ENCODE measurements at regions of chr18 and their contacts with region 1.

Region 1: GRCh38 chr18:35343936-35344735 is at the start of gene ZNF24:
- DNase-seq: peak; percentile 89 to 90
- H3K4me3 ChIP-seq: peak within 1 kb of the TSS; percentile 75
- H3K4me3 Mint-ChIP-seq: peak within 1 kb of the TSS; percentile 97
- H3K27ac Mint-ChIP-seq: peak within 1 kb of the TSS; percentile 92
- H3K4me1 ChIP-seq: no peaks in the 10 kb centered on the region
- H3K4me1 Mint-ChIP-seq: no peaks in the 10 kb centered on the region
- H3K27me3 ChIP-seq: no peaks in the 10 kb centered on the region
- H3K27me3 Mint-ChIP-seq: no peaks in the 10 kb centered on the region
- CTCF ChIP-seq: no peak
- total RNA-seq, gene ZNF24: 19.4 and 21.3 TPM in 2 replicates

Region 2: DNA sequence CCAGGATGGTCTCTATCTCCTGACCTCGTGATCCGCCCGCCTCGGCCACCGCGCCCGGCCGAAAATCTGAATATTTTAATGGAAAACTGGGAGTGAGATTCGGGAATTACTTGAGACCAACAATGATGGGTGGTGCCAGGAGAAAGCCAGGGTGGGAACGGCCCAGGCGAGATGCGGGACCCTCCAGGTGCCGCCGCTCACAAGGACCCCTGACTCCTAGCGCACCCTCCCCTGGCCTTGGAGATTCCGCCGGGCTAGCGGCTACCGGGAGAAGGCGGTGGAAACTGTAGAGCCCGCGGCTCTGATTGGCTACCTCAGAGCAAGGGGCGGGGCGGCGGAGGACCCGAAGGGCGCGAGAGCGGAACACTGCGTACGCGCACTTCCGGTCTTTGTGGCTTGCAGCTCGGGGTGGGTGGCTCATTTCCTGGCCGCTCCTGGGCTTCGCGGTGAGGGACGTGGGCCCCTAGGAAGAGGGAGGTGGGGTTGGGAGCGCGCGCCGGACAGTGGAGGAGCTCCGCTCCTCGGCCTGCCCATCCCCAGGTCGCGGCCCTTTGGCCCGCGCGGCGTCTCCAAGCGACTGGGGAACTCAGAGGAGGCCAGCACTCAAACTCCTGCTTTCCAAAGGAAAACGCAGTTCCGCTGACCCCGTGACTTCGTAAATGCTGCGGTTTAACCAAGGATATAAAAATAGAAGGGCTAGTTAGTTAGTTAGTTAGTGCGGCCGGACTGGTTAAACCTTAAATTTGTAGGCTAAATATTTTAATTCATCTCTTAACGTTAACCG is 103.3 kb before region 1 on chr18 and contains the start of gene ZNF397:
- CTCF ChIA-PET with region 1: no interaction called
- POLR2A ChIA-PET with region 1: no interaction called
- intact Hi-C with region 1: loop called (anchors 2 kb)
- DNase-seq: peak; percentile 92 to 94
- H3K4me3 ChIP-seq: peak within 1 kb of the TSS; percentile 68
- H3K4me3 Mint-ChIP-seq: peak within 1 kb of the TSS; percentile 80
- H3K27ac Mint-ChIP-seq: peak within 1 kb of the TSS; percentile 94
- H3K4me1 ChIP-seq: no peaks in the 10 kb centered on the region
- H3K4me1 Mint-ChIP-seq: no peaks in the 10 kb centered on the region
- H3K27me3 ChIP-seq: no peaks in the 10 kb centered on the region
- H3K27me3 Mint-ChIP-seq: no peaks in the 10 kb centered on the region
- CTCF ChIP-seq: no peak
- total RNA-seq, gene ZNF397: 4.9 and 6.0 TPM in 2 replicates

Region 3: DNA sequence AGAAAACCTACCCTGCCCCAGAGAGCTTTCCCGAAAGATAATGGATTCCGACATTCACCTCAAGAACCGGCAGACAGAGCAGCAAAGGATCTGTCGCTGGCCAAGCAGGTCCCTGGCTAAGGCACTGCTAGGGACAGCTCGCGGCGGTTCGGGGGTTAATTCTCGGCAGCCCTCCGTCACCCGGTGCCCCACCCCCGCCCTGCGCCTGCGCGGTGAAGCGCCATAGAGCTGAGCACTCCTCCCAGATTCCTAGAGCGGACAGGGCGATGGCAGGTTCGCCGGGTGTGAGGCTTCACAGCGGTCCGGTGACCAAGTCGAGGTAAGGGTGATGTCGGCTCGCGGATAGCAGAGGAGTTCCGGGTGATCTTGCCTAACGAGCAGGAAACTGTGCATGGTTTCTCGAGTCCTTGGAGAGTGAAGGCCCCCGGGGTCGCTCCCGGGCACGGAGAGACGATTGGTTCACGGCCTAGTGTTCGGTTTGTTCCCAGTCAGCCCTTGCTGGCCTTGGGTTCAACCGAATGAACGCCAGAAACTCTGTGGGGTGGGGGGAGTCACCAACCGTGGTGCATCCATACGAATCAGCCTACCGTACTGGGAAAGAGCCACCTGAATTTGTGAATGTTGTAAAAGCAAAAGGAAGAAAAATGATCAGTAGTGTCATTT is 53.9 kb before region 1 on chr18 and contains the start of gene ZSCAN30:
- CTCF ChIA-PET with region 1: no interaction called
- POLR2A ChIA-PET with region 1: no interaction called
- intact Hi-C with region 1: loop called (anchors 1 kb)
- DNase-seq: peak; percentile 91 to 92
- H3K4me3 ChIP-seq: peak within 1 kb of the TSS; percentile 47
- H3K4me3 Mint-ChIP-seq: peak within 1 kb of the TSS; percentile 95
- H3K27ac Mint-ChIP-seq: peak within 1 kb of the TSS; percentile 97
- H3K4me1 ChIP-seq: no peaks in the 10 kb centered on the region
- H3K4me1 Mint-ChIP-seq: peaks cover 6% of the 10 kb centered on the region
- H3K27me3 ChIP-seq: no peaks in the 10 kb centered on the region
- H3K27me3 Mint-ChIP-seq: no peaks in the 10 kb centered on the region
- CTCF ChIP-seq: no peak
- total RNA-seq, gene ZSCAN30: 11.9 and 14.1 TPM in 2 replicates

Measured in Caco-2 (cell line).